Esophagus squamous epithelium (tissue), 5 donors: ENCODE measurements at regions of chr15 and their contacts with region 1.

Region 1: GRCh38 chr15:53611145-53611920 is 148.1 kb downstream of the WDR72 start:
- DNase-seq: no peak
- H3K4me3 ChIP-seq: no peak overlapping the region
- H3K27ac ChIP-seq: no peak overlapping the region
- H3K4me1 ChIP-seq: no peaks in the 10 kb centered on the region
- H3K27me3 ChIP-seq: no peaks in the 10 kb centered on the region
- CTCF ChIP-seq: no peak
- POLR2A ChIP-seq: no peak

Region 2: GRCh38 chr15:53665917-53666316 is 54.6 kb after region 1 on chr15:
- intact Hi-C with region 1: loop called (anchors 10 kb)
- DNase-seq: no peak
- H3K4me3 ChIP-seq: no peak overlapping the region
- H3K27ac ChIP-seq: no peak overlapping the region
- H3K4me1 ChIP-seq: no peaks in the 10 kb centered on the region
- H3K27me3 ChIP-seq: no peaks in the 10 kb centered on the region
- CTCF ChIP-seq: no peak
- POLR2A ChIP-seq: no peak

Region 3: GRCh38 chr15:53693729-53694475 is 82.6 kb after region 1 on chr15:
- intact Hi-C with region 1: no loop called
- DNase-seq: no peak
- H3K4me3 ChIP-seq: no peak overlapping the region
- H3K27ac ChIP-seq: no peak overlapping the region
- H3K4me1 ChIP-seq: peaks cover 0 to 7% (median 0%) of the 10 kb centered on the region in 3 donors
- H3K27me3 ChIP-seq: no peaks in the 10 kb centered on the region
- CTCF ChIP-seq: no peak
- POLR2A ChIP-seq: no peak